Esophagus muscularis mucosa (tissue), 4 donors: ENCODE measurements at regions of chr22 and their contacts with region 1.

Region 1: DNA sequence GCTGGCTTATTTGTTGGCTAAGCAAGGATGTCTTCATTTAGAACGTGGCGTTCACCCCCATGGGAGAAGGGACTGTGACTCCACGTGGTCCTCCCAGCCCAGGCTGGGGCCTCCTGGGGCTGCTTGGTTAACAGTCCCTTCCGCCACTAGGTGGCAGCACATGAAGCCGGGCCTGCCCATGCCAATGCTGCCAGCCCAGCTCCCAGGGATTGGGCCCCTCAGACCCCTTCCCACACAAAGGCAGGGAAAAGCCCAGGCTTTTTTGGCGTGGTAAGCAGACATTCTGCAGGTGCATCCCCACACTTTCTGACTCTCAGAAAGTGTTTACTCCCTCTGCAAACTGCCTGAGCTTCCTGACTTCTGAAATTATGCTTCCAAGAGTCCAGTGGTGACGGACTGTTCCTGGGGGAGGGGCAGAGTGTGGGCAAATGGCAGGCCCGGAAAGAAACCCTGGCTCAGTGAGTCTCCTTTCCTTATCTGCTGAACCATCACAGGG is 3.1 kb downstream of the CBX6 start:
- DNase-seq: no peak
- H3K4me3 ChIP-seq: no peak overlapping the region
- H3K27ac ChIP-seq: peak overlapping the region in 1 of 4 donors; percentile 99
- H3K4me1 ChIP-seq: peaks cover 72 to 87% (median 85%) of the 10 kb centered on the region in 4 donors
- H3K27me3 ChIP-seq: no peaks in the 10 kb centered on the region
- CTCF ChIP-seq: peak; percentile 85 to 97 (median 91)
- EP300 ChIP-seq: no peak
- POLR2A ChIP-seq: no peak

Region 2: DNA sequence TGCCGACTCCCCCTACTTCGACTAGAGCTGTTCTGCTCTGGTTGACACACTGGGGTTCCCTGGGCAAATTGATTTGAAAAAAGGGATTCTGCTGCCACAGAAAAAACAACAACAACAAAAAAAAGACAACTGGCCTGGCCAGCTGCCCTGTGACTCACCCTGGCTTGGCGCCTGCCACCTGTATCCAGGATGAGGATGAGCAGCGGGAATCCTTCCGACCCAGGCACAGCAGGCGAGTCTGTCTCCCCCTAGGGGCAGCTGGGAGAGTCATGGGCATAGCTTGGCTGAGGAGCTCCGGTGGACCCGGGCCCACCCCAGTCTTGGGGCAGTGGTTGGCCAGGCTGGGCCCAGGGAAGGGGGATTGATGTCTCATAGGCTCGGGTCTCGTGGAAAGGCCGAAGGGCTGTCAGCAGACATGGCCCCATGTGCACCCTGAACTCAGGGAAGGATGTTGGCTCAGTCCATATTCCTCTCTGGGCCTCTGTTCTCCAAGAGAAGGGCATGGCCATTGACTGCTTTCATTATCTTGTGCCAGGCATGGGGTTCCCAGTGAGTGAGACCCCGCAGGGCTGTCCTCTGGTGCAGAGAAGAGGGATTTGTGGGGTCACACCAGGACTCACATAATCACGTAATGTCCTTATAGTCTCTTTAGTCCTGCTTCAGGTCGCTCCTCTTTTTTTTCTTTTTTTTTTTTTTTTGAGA is 102.7 kb before region 1 on chr22:
- intact Hi-C with region 1: loop called (anchors 2 kb)
- DNase-seq: no peak
- H3K4me3 ChIP-seq: no peak overlapping the region
- H3K27ac ChIP-seq: no peak overlapping the region
- H3K4me1 ChIP-seq: peaks cover 0 to 17% (median 14%) of the 10 kb centered on the region in 4 donors
- H3K27me3 ChIP-seq: peaks cover 0 to 4% (median 0%) of the 10 kb centered on the region in 4 donors
- CTCF ChIP-seq: peak; percentile 45 to 74 (median 53)
- EP300 ChIP-seq: no peak
- POLR2A ChIP-seq: no peak

Region 3: DNA sequence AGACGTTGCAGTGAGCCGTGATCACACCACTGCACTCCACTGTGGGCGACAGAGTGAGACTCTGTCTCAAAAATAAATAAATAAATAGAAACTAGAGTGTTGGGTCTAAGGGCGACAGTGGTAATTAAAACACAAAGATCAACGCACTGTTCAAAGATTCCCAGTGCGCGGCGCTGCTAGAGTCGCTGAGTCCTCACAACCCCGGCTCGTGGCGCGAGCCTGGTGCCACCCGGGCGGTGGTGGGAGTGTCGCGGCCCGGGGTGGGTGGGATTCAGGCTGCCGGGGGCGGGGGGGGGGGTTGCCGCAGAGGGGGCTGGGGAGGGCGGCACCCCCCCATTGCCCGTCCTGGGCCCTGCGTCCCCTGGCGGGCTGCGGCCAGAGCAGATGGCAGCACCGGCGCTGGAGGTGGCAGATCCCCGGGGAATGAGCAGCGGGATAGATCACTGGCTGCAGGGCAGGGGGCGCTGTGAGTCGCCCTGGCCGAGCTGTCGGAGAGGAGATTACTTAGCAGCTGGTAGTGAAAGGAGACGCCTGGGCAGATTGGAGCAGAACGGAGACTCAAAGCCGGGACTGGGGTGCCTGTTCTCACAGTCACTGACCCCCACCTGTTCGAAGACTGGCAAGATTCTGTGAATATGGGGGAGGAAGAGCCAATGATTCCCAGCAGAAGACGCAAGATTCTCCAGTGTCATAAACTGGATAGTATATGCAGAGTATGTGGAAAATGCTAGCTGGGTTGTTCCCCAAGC is 58.3 kb after region 1 on chr22:
- intact Hi-C with region 1: loop called (anchors 2 kb)
- DNase-seq: no peak
- H3K4me3 ChIP-seq: peak overlapping the region; percentile 52 to 58 (median 54)
- H3K27ac ChIP-seq: peak overlapping the region; percentile 77 to 85 (median 81)
- H3K4me1 ChIP-seq: peaks cover 18 to 50% (median 45%) of the 10 kb centered on the region in 4 donors
- H3K27me3 ChIP-seq: no peaks in the 10 kb centered on the region
- CTCF ChIP-seq: peak; percentile 64 to 83 (median 77)
- EP300 ChIP-seq: no peak
- POLR2A ChIP-seq: no peak

Region 4: DNA sequence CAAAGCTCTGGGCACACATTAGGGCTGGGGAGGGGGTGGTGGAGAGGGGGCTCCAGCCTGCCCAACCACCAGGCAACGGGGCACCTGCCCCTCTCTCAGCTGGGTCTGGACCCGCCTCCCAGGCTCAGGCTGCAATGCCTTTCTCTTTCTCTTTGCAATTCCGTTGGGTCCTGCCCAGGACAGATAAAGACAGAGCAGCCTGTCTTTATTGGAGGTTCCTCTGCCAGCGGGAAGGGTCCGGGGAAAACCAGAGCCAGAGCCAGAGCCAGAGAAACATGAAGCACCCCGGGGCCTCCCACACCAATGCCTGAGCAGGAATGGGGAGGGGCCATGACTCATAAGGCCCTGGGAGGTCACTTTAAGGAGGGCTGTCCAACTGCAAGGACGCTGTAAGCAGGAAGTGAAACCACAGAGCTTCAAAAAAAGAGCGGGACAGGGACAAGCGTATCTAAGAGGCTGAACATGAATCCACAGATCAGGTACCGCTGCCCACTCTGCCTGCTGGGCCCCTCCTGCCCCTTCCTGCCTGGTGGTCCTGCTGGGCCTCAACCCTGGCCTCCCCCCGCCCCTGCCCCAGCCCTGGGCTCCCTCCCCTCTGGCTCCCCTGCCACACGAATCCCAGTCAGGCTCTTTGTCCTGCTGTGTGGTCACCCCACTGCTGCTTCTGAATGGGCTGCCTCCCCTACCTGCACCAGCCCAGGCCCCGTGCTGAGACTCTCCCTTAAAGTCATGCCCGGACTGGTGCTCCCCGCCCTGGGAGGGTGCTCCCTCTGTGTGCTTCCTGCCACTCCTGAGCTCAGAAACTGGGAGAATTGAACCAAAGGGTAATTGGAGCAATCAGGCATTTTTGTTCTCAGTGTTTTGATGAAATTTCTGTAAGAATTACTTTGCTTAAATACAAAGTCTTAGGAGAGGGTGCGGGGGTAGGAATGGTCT is 113.3 kb after region 1 on chr22 and contains the start of gene APOBEC3B:
- intact Hi-C with region 1: loop called (anchors 5 kb)
- DNase-seq: peak; percentile 94
- H3K4me3 ChIP-seq: peak within 1 kb of the TSS in 3 of 4 donors; percentile 51 to 62 (median 58)
- H3K27ac ChIP-seq: peak within 1 kb of the TSS in 3 of 4 donors; percentile 63 to 73 (median 69)
- H3K4me1 ChIP-seq: peaks cover 0 to 22% (median 16%) of the 10 kb centered on the region in 4 donors
- H3K27me3 ChIP-seq: no peaks in the 10 kb centered on the region
- CTCF ChIP-seq: no peak
- EP300 ChIP-seq: no peak
- POLR2A ChIP-seq: no peak
- total RNA-seq, gene APOBEC3B: 0.50 TPM in 1 of 4 donors, not detected in the others

Region 5: DNA sequence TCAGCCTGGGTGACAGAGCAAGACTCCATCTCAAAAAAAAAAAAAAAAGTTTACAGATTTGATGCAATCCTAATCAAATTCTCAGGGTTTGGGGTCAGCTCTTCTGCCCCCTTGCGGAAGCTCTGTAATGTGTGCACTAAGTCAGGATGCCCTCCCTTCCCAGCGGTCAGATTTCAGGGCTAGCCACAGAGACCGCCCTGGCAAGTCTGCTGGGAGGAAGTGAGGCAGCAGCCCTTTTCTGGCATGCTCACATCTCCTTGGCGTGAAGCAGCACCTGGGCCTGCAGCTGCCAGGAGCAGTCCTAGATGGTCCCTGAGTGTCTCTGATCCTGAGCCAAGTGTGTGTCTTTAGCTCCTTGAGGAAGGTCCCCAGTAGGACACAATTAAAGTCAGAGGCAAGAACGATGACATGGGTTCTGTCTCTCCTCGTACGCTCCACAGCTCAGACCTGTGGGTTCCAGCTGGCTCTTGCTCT is 134.3 kb after region 1 on chr22:
- intact Hi-C with region 1: loop called (anchors 2 kb)
- DNase-seq: peak; percentile 94
- H3K4me3 ChIP-seq: no peak overlapping the region
- H3K27ac ChIP-seq: peak overlapping the region in 1 of 4 donors; percentile 30
- H3K4me1 ChIP-seq: peaks cover 0 to 9% (median 8%) of the 10 kb centered on the region in 4 donors
- H3K27me3 ChIP-seq: no peaks in the 10 kb centered on the region
- CTCF ChIP-seq: peak; percentile 75 to 86 (median 83)
- EP300 ChIP-seq: no peak
- POLR2A ChIP-seq: no peak

Region 6: DNA sequence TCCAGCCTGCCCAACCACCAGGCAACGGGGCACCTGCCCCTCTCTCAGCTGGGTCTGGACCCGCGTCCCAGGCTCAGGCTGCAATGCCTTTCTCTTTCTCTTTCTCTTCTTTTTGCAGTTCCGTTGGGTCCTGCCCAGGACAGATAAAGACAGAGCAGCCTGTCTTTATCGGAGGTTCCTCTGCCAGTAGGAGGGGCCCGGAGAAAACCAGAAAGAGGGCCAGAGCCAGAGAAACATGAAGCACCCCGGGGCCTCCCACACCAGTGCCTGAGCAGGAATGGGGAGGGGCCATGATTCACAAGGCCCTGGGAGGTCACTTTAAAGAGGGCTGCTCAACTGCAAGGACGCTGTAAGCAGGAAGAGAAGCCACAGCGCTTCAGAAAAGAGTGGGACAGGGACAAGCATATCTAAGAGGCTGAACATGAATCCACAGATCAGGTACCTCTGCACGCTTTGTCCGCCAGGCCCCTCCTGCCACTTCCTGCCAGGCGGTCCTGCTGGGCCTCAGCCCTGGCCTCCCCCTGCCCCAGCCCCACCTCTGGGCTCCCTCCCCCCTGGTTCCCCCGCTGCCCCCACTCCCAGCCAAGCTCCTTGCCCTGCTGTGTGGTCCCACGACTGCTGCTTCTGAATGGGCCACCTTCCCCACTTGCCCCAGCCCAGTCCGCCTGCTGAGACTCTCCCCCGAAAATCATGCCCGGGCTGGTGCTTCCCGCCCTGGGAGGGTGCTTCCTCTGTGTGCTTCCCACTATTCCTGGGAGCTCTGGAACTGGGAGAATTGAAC is 145.2 kb after region 1 on chr22 and contains the start of gene APOBEC3C:
- intact Hi-C with region 1: no loop called
- DNase-seq: peak; percentile 98
- H3K4me3 ChIP-seq: peak within 1 kb of the TSS; percentile 52 to 66 (median 62)
- H3K27ac ChIP-seq: peak within 1 kb of the TSS; percentile 79 to 83 (median 83)
- H3K4me1 ChIP-seq: peaks cover 7 to 23% (median 21%) of the 10 kb centered on the region in 4 donors
- H3K27me3 ChIP-seq: no peaks in the 10 kb centered on the region
- CTCF ChIP-seq: peak in 2 of 3 experiments; percentile 2 to 5
- EP300 ChIP-seq: no peak
- POLR2A ChIP-seq: no peak
- total RNA-seq, gene APOBEC3C: 7.1 to 11.3 (median 8.8) TPM

Region 7: GRCh38 chr22:39144101-39144767 is 275.3 kb after region 1 on chr22:
- intact Hi-C with region 1: loop called (anchors 5 kb)
- DNase-seq: no peak
- H3K4me3 ChIP-seq: peak overlapping the region; percentile 68 to 96 (median 90)
- H3K27ac ChIP-seq: peak overlapping the region; percentile 97 to 99 (median 98)
- H3K4me1 ChIP-seq: peaks cover 54 to 76% (median 63%) of the 10 kb centered on the region in 4 donors
- H3K27me3 ChIP-seq: no peaks in the 10 kb centered on the region
- CTCF ChIP-seq: no peak
- EP300 ChIP-seq: no peak
- POLR2A ChIP-seq: no peak